G401 (cell line): ENCODE measurements at regions of chr10 and their contacts with region 1.

Region 1: DNA sequence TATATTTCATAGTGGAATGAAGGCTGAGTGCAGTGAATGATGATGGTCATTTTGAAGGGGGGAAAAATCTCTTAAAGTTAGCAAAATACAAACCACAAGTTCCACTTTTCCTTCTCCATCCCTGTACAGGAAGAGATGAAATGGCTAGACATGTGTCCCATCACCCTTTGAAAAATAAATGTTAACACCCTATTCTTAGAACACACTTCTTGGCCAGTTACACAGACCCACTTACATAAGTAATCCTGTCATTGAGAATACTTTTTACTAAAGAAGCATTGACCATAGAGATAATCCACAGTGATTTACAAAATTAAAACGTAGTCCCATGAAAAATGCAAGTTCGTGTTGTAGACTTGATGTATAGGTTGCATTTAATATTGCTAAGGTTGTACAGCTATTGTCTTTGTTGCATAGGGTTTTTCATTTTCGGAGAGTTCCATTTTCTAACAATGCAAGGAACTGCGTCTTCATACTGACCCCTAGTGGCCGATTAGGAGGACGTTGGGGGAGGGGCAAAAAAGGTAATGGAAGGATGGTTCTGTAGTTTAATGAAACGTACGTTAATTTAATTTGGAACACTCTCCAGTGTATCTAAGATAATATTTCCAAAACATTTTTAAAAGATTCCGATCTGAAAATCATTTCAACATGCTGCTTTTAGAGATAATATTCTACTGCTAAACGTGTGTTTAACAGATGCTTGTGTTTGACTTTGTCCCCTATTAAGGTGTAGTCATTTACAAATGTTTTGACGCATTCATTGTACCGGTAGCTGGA is 60.9 kb downstream of the ARMC3 start:
- DNase-seq: peak; percentile 75

Region 2: DNA sequence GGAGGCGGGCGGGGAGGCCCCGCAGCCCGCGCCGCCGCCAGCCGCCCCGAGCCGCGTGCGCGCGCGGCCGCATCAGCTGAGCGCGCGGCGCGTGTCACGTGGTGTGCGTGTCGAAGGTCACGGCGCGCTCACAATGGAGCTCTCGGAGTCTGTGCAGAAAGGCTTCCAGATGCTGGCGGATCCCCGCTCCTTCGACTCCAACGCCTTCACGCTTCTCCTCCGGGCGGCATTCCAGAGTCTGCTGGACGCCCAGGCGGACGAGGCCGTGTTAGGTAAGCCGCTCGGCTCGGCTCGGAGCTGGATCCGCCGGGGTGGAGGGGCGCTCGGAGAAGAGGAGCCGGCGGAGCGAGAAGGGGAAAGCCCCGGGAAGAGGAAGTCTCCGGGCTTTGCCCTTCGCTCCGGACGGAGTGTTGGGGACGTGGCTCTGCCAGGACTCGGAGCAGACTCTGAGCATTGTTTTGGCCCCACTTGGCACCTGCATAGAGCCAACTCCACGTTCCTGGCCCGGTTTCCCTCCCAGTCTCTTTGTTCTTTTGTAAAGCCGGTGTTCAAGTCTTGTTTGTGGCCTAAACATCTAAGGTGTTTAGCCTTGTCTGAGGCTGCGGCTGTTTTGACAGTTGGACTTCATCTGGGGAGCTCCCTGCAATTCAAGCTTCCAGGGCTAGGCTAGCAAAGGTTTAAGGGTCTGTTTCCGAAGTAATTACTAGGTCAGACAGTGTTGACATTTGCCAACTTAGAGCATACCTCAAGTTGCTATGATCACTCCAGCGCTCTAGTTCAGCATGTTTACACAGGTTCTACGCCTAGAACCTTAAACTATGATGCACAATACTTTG is 672.3 kb before region 1 on chr10 and contains the start of gene COMMD3:
- in situ Hi-C with region 1: loop called (anchors 25 kb)
- DNase-seq: peak; percentile 87
- total RNA-seq, gene COMMD3: 119 and 132 TPM in 2 replicates

Region 3: GRCh38 chr10:22597138-22597537 is 391.6 kb before region 1 on chr10:
- in situ Hi-C with region 1: loop called (anchors 25 kb)
- DNase-seq: no peak